Esophagus squamous epithelium (tissue), 5 donors: ENCODE measurements at regions of chr3 and their contacts with region 1.

Region 1: GRCh38 chr3:49171119-49171774 is at the start of gene KLHDC8B:
- DNase-seq: no peak
- H3K4me3 ChIP-seq: peak within 1 kb of the TSS; percentile 52 to 84 (median 80)
- H3K27ac ChIP-seq: peak within 1 kb of the TSS; percentile 84 to 94 (median 89)
- H3K4me1 ChIP-seq: peaks cover 36 to 63% (median 38%) of the 10 kb centered on the region in 3 donors
- H3K27me3 ChIP-seq: no peaks in the 10 kb centered on the region
- CTCF ChIP-seq: peak; percentile 90 to 98 (median 97)
- POLR2A ChIP-seq: peak in 2 of 4 donors; percentile 50 to 58
- total RNA-seq, gene KLHDC8B: 18.0 to 58.6 (median 46.3) TPM

Region 2: DNA sequence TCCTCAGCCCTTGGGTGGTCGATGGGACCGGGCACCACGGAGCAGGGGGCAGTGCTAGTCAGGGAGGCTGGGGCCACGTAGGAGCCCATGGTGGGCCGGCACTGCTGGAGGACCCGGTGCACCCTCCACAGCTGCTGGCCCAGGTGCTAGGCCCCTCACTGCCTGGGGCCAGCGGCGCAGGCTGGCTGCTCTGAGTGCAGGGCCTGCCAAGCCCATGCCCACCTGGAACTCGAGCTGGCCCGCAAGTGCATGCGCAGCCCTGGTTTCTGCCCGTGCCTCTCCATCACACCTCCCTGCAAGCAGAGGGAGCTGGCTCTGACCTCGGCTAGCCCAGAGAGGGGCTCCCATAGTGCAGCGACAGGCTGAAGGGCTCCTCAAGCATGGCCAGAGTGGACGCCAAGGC is 42.3 kb after region 1 on chr3:
- intact Hi-C with region 1: no loop called
- DNase-seq: no peak
- H3K4me3 ChIP-seq: no peak overlapping the region
- H3K27ac ChIP-seq: no peak overlapping the region
- H3K4me1 ChIP-seq: peaks cover 9 to 14% (median 11%) of the 10 kb centered on the region in 3 donors
- H3K27me3 ChIP-seq: no peaks in the 10 kb centered on the region
- CTCF ChIP-seq: no peak
- POLR2A ChIP-seq: no peak

Region 3: GRCh38 chr3:49276475-49277382 is 105.5 kb after region 1 on chr3 and contains the start of gene C3orf62:
- intact Hi-C with region 1: loop called (anchors 10 kb)
- DNase-seq: peak; percentile 49
- H3K4me3 ChIP-seq: peak within 1 kb of the TSS; percentile 32 to 64 (median 52)
- H3K27ac ChIP-seq: peak within 1 kb of the TSS; percentile 84 to 97 (median 91)
- H3K4me1 ChIP-seq: peaks cover 3 to 45% (median 33%) of the 10 kb centered on the region in 3 donors
- H3K27me3 ChIP-seq: no peaks in the 10 kb centered on the region
- CTCF ChIP-seq: peak in 1 of 6 experiments; percentile 4
- POLR2A ChIP-seq: peak in 2 of 4 donors; percentile 29 to 58
- total RNA-seq, gene C3orf62: 1.8 to 3.6 (median 3.0) TPM

Region 4: DNA sequence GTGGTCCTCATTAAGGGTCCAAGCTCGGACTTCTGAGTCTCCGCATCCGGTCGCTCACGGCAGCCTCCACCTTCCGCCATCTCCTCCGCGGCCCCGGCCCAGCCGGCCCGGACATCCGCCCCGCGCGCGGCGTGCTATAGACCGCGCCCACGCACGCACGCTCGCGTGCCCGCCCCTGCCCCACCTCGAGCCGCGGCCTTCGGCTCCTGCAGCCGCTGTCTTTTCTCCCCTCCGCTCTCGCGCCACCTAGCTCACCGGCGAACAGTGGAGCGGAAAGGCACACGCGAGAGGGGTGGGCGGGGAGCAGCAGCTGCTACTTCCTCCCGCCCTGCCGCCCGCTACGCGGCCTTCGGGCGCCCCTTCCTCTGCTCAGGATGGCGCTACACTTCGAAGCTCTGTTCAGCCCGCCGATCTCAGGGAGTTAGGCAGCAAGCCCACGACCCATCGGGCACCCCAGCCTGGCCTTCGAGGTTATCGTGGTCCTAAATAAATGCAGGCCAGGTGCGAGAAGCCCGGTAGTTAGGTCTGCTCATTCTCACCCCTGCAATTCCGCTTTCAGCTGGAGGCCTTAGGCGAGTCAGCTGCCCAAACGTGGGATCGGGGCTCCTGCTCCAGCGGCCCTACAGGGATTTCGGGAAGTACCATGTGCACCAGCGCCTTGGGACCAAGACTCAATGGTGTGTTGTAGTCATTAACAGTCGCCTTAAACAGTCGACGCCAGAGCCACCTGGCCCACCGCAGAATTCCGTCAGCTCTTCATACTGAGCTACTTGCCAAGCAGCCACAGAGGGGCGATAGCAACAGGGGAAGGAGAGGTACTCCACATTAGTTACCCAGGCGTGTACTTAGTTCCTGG is 168.9 kb after region 1 on chr3 and contains the start of gene USP4:
- intact Hi-C with region 1: loop called (anchors 10 kb)
- DNase-seq: peak; percentile 66
- H3K4me3 ChIP-seq: peak within 1 kb of the TSS; percentile 70 to 91 (median 83)
- H3K27ac ChIP-seq: peak within 1 kb of the TSS; percentile 89 to 99 (median 96)
- H3K4me1 ChIP-seq: peaks cover 15 to 65% (median 24%) of the 10 kb centered on the region in 3 donors
- H3K27me3 ChIP-seq: no peaks in the 10 kb centered on the region
- CTCF ChIP-seq: peak in 5 of 6 experiments; percentile 36 to 83 (median 47)
- POLR2A ChIP-seq: peak in 2 of 4 donors; percentile 74 to 86
- total RNA-seq, gene USP4: 8.1 to 29.6 (median 19.3) TPM